ENCODE measurements at regions of chr12 and their contacts with region 1.

Region 1: GRCh38 chr12:55996715-55997534 is at the start of gene SUOX:
- H3K4me3 ChIP-seq: peak within 1 kb of the TSS; percentile 65
- H3K27ac ChIP-seq: peak within 1 kb of the TSS; percentile 38; the same call in 1 of the 2 replicates
- H3K4me1 ChIP-seq: no peaks in the 10 kb centered on the region; the same call in 1 of the 2 replicates
- CTCF ChIP-seq: no peak

Region 2: DNA sequence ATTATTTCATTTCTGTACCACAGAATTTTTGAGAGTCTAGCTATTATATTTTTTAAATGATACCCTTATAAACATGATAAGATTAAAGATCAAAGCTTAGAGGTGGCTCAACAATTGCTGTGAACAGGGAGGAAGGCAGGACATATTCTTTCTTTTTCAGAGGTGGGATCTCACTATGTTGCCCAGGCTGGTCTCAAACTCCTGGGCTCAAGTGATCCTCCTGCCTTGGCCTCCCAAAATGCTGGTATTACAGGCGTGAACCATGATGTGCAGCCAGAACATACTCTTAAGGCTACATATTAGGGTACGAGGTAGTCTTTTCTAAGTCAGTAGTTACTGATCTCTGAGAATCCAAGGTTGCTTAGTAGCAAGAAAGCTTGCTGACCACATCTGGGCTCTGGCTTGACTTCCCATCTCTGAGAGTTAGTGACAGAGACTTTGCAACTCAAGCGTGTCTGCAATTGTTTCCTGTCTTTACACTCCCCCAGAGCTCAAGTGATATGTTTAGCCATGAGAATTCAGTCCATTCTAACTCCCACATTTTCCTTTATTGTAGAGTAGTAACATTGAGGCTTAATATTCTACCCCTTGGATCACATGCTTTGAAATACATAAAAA is 14.5 kb before region 1 on chr12:
- CTCF ChIA-PET with region 1: interaction called, 35 read pairs
- POLR2A ChIA-PET with region 1: interaction called, 5 read pairs
- H3K4me3 ChIP-seq: no peak overlapping the region
- H3K27ac ChIP-seq: no peak overlapping the region
- H3K4me1 ChIP-seq: no peaks in the 10 kb centered on the region
- CTCF ChIP-seq: no peak

Region 3: GRCh38 chr12:56007564-56008559 is 10.9 kb after region 1 on chr12:
- CTCF ChIA-PET with region 1: interaction called, 17 read pairs
- POLR2A ChIA-PET with region 1: interaction called, 48 read pairs
- H3K4me3 ChIP-seq: peak overlapping the region; percentile 51
- H3K27ac ChIP-seq: peak overlapping the region; percentile 70
- H3K4me1 ChIP-seq: no peaks in the 10 kb centered on the region; the same call in 1 of the 2 replicates
- CTCF ChIP-seq: no peak

Region 4: GRCh38 chr12:56014206-56014605 is 17.3 kb after region 1 on chr12:
- CTCF ChIA-PET with region 1: interaction called, 15 read pairs
- POLR2A ChIA-PET with region 1: interaction called, 6 read pairs
- H3K4me3 ChIP-seq: no peak overlapping the region
- H3K27ac ChIP-seq: no peak overlapping the region
- H3K4me1 ChIP-seq: no peaks in the 10 kb centered on the region
- CTCF ChIP-seq: no peak

Region 5: GRCh38 chr12:56029666-56030293 is 32.9 kb after region 1 on chr12:
- CTCF ChIA-PET with region 1: interaction called, 33 read pairs
- POLR2A ChIA-PET with region 1: interaction called, 3 read pairs
- H3K4me3 ChIP-seq: no peak overlapping the region
- H3K27ac ChIP-seq: no peak overlapping the region
- H3K4me1 ChIP-seq: no peaks in the 10 kb centered on the region
- CTCF ChIP-seq: no peak

Region 6: GRCh38 chr12:56041552-56042429 is 44.9 kb after region 1 on chr12 and contains the start of gene RPS26:
- CTCF ChIA-PET with region 1: interaction called, 46 read pairs
- POLR2A ChIA-PET with region 1: interaction called, 9 read pairs
- H3K4me3 ChIP-seq: peak within 1 kb of the TSS; percentile 75
- H3K27ac ChIP-seq: peak within 1 kb of the TSS; percentile 93
- H3K4me1 ChIP-seq: peaks cover 19% of the 10 kb centered on the region
- CTCF ChIP-seq: peak; percentile 57

Region 7: GRCh38 chr12:56127888-56128669 is 131.2 kb after region 1 on chr12 and contains the start of gene ESYT1:
- CTCF ChIA-PET with region 1: no interaction called
- POLR2A ChIA-PET with region 1: no interaction called
- H3K4me3 ChIP-seq: peak within 1 kb of the TSS; percentile 80
- H3K27ac ChIP-seq: peak within 1 kb of the TSS; percentile 57
- H3K4me1 ChIP-seq: peaks cover 9% of the 10 kb centered on the region
- CTCF ChIP-seq: peak; percentile 67; the same call in 1 of the 2 replicates

Measured in HEK293 (cell line).